Breast epithelium (tissue), 4 donors: ENCODE measurements at regions of chr7 and their contacts with region 1.

Region 1: DNA sequence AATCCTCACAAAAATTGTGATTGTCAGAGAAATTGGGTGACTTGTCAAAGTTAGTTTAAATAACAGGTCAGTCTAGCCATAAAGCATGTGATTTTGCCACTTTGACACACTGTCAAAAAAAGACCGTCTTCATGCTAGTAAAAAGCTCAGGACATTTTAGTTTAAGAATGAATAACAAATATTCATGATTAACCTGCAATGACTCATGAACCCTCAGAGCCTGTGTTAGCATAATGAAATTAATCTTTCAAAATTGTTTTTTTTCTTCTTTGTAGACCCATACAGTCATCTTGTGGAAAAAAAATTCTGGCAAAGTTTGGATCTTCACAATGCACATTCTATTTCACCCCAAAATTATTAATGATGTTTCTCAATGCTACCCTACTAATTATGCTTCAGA is 255.2 kb upstream of the POT1 start:
- DNase-seq: no peak
- H3K4me3 ChIP-seq: no peak overlapping the region
- H3K27ac ChIP-seq: no peak overlapping the region
- H3K4me1 ChIP-seq: no peaks in the 10 kb centered on the region
- H3K27me3 ChIP-seq: no peaks in the 10 kb centered on the region
- CTCF ChIP-seq: no peak
- POLR2A ChIP-seq: no peak

Region 2: DNA sequence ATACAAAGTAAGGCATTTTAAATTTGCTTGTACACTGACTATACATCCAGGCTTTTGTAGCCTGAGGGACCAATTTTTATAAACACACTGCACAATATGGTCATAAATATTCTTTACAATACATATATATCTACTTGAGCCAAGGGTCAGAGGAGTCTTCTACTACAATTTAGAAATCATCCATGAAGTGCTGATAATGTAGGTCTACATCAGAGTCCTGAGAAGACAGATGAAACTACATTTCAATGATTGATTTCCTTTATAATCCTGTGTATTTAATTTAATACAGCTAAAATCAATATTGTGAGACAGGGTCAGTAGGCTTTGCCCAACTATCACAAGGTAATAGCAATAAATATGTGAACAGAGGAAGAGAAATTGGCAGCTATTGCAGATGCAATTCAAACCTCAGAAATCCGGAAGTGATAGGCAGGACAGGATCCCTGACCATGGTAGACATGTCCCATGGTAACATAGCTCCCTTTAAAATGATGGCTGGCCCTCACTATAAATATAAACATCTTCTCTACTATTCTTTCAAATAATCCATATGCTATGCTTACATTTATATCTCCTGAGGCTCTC is 62.8 kb after region 1 on chr7:
- intact Hi-C with region 1: loop called (anchors 2 kb)
- DNase-seq: no peak
- H3K4me3 ChIP-seq: no peak overlapping the region
- H3K27ac ChIP-seq: no peak overlapping the region
- H3K4me1 ChIP-seq: no peaks in the 10 kb centered on the region
- H3K27me3 ChIP-seq: no peaks in the 10 kb centered on the region
- CTCF ChIP-seq: no peak
- POLR2A ChIP-seq: no peak